ENCODE measurements at regions of chr5 and their contacts with region 1.

Region 1: GRCh38 chr5:88680253-88681132 is 202.5 kb downstream of the MEF2C start:
- DNase-seq: peak; percentile 69
- ATAC-seq: peak; percentile 91 to 96

Region 2: DNA sequence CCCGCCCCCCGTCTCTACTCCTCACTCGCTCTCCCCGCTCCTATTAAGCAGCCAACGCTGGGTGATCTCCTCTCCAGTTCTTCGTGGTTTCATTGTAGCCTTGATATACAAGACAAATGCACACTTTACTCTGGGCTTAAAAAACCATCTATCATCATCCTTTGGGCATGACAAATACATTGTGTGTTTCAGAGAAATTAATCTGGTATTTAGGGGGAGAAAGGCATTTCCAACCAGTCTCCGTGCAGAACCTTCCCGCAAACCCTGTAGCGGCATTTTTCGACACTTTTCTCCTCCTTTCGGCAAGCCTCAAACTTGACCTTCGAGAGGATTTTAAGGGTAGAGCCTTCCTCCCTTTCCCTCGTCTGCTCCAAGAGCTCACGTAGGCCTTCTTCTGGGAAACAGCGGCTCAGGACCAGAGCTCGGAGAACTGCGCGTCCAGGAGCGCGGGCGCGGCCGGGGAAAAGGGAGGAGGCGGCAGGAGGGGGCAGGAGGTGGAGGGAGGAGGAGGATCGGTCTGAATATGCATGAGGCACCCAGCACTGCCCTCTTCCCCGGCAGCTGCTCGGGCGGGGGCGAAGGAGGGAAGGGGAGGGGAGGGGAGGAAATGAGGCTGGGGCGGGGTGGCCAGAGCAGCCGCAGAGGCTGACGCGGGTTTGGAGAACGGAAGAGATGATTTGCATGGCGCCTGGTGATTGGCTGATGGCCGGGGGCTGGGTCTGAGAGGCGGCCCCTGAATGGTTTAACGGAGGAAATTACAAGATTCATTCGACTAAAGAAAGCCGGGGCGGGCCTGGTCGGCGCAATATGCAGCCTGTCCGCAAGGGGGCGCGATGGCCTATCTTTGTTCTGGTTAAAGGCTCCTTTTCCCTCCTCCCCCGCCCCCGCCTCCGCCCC is 539.4 kb before region 1 on chr5:
- intact Hi-C with region 1: loop called (anchors 5 to 10 kb)
- DNase-seq: peak; percentile 95
- ATAC-seq: peak; percentile 97 to 99

Region 3: DNA sequence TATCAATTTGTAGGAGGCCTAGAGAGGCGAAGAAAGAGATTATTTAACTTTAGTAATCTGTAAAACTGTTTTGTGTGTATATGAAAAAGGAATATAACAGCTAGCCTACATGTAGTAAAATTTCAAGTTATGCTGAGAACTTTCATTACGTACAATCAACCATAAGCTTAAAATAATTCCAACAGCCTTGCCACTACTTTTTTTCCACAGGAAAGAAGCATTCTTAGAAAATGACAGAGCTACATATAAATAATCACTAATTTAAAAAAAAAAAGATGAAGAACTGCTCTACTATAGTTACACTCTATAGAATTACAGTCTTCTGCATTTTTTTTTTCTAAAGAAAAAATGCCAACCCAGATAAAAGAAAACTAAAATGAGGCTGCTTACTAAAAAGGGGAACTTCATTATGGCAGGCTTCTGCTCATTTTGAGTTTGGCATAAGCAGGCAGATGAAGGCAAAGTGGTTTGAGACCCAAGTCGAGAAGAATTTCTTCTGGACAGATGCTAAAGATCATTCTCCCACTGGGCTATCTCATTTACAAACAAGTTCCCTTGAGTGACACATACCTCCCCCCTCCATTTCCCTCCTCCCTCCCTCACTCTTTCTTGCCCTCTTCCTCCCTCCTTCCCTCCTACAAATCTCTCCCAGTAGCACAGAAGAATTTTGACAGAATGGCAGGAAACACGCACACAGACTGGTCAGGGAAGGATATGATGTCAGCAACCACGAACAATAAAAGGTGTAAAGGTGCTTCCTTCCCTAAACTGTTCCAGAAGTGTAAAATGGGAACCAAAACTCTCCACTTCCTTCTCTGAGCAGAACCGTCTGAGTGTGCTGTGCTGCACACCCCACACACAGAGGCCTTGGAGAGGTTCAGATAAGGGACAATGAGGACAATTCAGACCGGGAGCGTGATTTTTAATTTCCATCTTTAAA is 146.4 kb after region 1 on chr5:
- intact Hi-C with region 1: no loop called
- DNase-seq: peak; percentile 45
- ATAC-seq: peak; percentile 80 to 87